Caco-2 (cell line): ENCODE measurements at regions of chr12 and their contacts with region 1.

Region 1: GRCh38 chr12:125240717-125241116 is 175.5 kb downstream of the AACS start:
- DNase-seq: no peak
- H3K4me3 ChIP-seq: no peak overlapping the region
- H3K4me3 Mint-ChIP-seq: no peak overlapping the region
- H3K27ac Mint-ChIP-seq: no peak overlapping the region
- H3K4me1 ChIP-seq: no peaks in the 10 kb centered on the region
- H3K4me1 Mint-ChIP-seq: no peaks in the 10 kb centered on the region
- H3K27me3 ChIP-seq: no peaks in the 10 kb centered on the region; the same call in 1 of the 2 replicates
- H3K27me3 Mint-ChIP-seq: peaks cover 11% of the 10 kb centered on the region
- CTCF ChIP-seq: no peak

Region 2: GRCh38 chr12:125330645-125331341 is 90.1 kb after region 1 on chr12:
- CTCF ChIA-PET with region 1: interaction called, 3 read pairs
- POLR2A ChIA-PET with region 1: no interaction called
- intact Hi-C with region 1: loop called (anchors 2 kb)
- DNase-seq: peak; percentile 62 to 84
- H3K4me3 ChIP-seq: peak overlapping the region; percentile 26
- H3K4me3 Mint-ChIP-seq: peak overlapping the region; percentile 37
- H3K27ac Mint-ChIP-seq: no peak overlapping the region
- H3K4me1 ChIP-seq: no peaks in the 10 kb centered on the region
- H3K4me1 Mint-ChIP-seq: no peaks in the 10 kb centered on the region
- H3K27me3 ChIP-seq: peaks cover 1% of the 10 kb centered on the region; the same call in 1 of the 2 replicates
- H3K27me3 Mint-ChIP-seq: peaks cover 15% of the 10 kb centered on the region
- CTCF ChIP-seq: peak; percentile 83 to 90

Region 3: GRCh38 chr12:125402874-125403789 is 162.4 kb after region 1 on chr12:
- CTCF ChIA-PET with region 1: interaction called, 7 read pairs
- POLR2A ChIA-PET with region 1: no interaction called
- intact Hi-C with region 1: loop called (anchors 1 kb)
- DNase-seq: peak in 1 of 2 experiments; percentile 39
- H3K4me3 ChIP-seq: no peak overlapping the region
- H3K4me3 Mint-ChIP-seq: no peak overlapping the region
- H3K27ac Mint-ChIP-seq: no peak overlapping the region
- H3K4me1 ChIP-seq: peaks cover 5% of the 10 kb centered on the region; the same call in 1 of the 2 replicates
- H3K4me1 Mint-ChIP-seq: no peaks in the 10 kb centered on the region
- H3K27me3 ChIP-seq: no peaks in the 10 kb centered on the region; the same call in 1 of the 2 replicates
- H3K27me3 Mint-ChIP-seq: peaks cover 8% of the 10 kb centered on the region
- CTCF ChIP-seq: peak; percentile 59 to 71